ENCODE measurements at regions of chr4 and their contacts with region 1.

Region 1: GRCh38 chr4:98658287-98659105 is at the start of gene TSPAN5:
- DNase-seq: peak; percentile 95
- H3K4me3 ChIP-seq: peak within 1 kb of the TSS; percentile 96
- H3K27ac ChIP-seq: peak within 1 kb of the TSS; percentile 87 to 99
- H3K4me1 ChIP-seq: peaks cover 19 to 27% of the 10 kb centered on the region in 2 experiments
- H3K27me3 ChIP-seq: no peaks in the 10 kb centered on the region
- CTCF ChIP-seq: no peak
- EP300 ChIP-seq: no peak
- RAD21 ChIP-seq: 0 out of 2 replicates have a peak, but pooled peaks have one; percentile 9
- polyA plus RNA-seq, gene TSPAN5: 38.6 and 54.5 TPM in 2 replicates

Region 2: DNA sequence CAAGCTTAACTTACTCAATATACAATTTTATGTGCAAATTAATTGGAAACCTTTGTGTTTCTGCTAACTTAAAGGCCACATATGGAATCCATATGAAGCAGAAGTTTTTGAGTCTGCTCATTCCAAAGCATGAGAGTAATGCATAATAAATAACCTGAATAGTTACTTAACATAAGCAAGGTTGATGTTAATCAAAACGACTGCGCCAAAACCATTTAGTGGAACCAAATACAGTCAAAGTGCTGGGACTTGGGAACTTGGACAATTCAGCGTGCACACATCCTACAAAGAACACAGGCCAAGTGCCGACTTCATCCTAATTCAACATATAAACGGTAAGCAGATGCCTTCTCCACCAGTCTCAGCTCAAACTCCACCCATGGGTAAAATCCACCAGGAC is 17.1 kb before region 1 on chr4:
- CTCF ChIA-PET with region 1: no interaction called
- POLR2A ChIA-PET with region 1: no interaction called
- DNase-seq: no peak
- H3K4me3 ChIP-seq: no peak overlapping the region
- H3K27ac ChIP-seq: peak overlapping the region in 1 of 2 experiments; percentile 70; a peak in 1 of 4 replicates
- H3K4me1 ChIP-seq: peaks cover 5 to 25% of the 10 kb centered on the region in 2 experiments; a peak in 2 of 4 replicates
- H3K27me3 ChIP-seq: no peaks in the 10 kb centered on the region
- CTCF ChIP-seq: no peak
- EP300 ChIP-seq: no peak
- RAD21 ChIP-seq: no peak

Region 3: GRCh38 chr4:98672583-98673287 is 14.2 kb after region 1 on chr4:
- CTCF ChIA-PET with region 1: interaction called, 22 read pairs
- POLR2A ChIA-PET with region 1: no interaction called
- DNase-seq: peak; percentile 74
- H3K4me3 ChIP-seq: no peak overlapping the region; a peak in 1 of 4 replicates
- H3K27ac ChIP-seq: peak overlapping the region in 1 of 2 experiments; percentile 1; a peak in 1 of 4 replicates
- H3K4me1 ChIP-seq: peaks cover 0 to 16% of the 10 kb centered on the region in 2 experiments; a peak in 2 of 4 replicates
- H3K27me3 ChIP-seq: no peaks in the 10 kb centered on the region
- CTCF ChIP-seq: peak; percentile 26
- EP300 ChIP-seq: peak in 1 of 2 experiments; percentile 83; a peak in 2 of 4 replicates
- RAD21 ChIP-seq: peak; percentile 58

Measured in SK-N-SH (cell line).